ENCODE measurements at regions of chr18 and their contacts with region 1.

Region 1: GRCh38 chr18:57446322-57446721 is 11.1 kb downstream of the ONECUT2 start:
- DNase-seq: no peak
- ATAC-seq: no peak
- H3K4me3 ChIP-seq: no peak overlapping the region
- H3K27ac ChIP-seq: no peak overlapping the region
- H3K4me1 ChIP-seq: peaks cover 0 to 5% (median under 1%) of the 10 kb centered on the region in 12 donors
- H3K27me3 ChIP-seq: peaks cover 18 to 79% (median 47%) of the 10 kb centered on the region in 9 donors
- CTCF ChIP-seq: peak; percentile 5 to 49 (median 26)
- POLR2A ChIP-seq: no peak

Region 2: DNA sequence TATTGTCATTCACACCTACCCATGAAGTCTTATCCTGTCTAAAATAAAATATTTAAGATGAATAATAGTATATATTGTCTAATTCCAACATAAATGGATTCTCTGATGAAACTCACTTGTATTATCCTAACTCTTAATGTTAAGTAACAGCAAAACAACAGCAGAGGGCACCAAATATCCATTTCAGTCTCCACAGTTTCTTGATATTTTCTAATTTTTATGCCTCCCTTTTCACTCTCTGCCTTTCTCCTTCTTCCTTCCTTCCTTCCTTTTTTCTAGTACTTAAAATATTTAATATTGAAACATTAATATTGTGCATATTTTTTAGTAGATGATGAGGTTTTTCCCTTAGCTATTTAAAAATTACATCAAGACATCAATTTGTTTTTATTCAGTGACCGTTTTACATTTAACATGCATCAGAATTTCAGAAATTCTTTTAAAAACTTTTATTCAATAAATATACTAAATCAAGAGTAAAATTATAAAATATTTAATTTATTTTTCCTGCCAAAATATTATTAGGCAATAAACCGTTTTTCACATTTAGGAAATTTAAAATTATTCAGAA is 697.5 kb before region 1 on chr18:
- intact Hi-C with region 1: loop called in 3 of 10 experiments (anchors 5 to 10 kb)
- DNase-seq: no peak
- ATAC-seq: no peak
- H3K4me3 ChIP-seq: no peak overlapping the region
- H3K27ac ChIP-seq: no peak overlapping the region
- H3K4me1 ChIP-seq: peaks cover 0 to 28% (median 5%) of the 10 kb centered on the region in 12 donors
- H3K27me3 ChIP-seq: no peaks in the 10 kb centered on the region
- CTCF ChIP-seq: peak; percentile 43 to 78 (median 68)
- POLR2A ChIP-seq: no peak

Region 3: DNA sequence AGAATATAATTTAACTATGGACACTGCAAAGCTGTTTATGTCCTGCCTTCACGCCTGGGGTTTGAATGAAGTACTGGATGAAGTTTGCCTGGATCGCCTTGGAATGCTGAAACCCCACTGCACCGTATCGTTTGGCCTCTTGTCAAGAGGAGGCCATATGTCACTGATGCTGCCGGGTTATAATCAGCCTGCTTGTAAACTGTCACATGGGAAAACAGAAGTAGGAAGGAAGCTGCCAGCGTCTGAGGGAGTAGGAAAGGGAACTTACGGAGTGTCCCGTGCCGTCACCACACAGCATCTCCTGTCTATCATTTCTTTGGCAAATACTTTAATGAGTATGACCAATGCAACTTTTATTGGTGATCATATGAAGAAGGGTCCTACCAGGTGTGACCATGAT is 689.4 kb before region 1 on chr18:
- intact Hi-C with region 1: loop called in 2 of 10 experiments (anchors 5 to 10 kb)
- DNase-seq: peak in 2 of 5 donors; percentile 9 to 34
- ATAC-seq: peak in 3 of 4 donors; percentile 43 to 71 (median 54)
- H3K4me3 ChIP-seq: no peak overlapping the region
- H3K27ac ChIP-seq: no peak overlapping the region
- H3K4me1 ChIP-seq: peaks cover 0 to 11% (median 4%) of the 10 kb centered on the region in 12 donors
- H3K27me3 ChIP-seq: no peaks in the 10 kb centered on the region
- CTCF ChIP-seq: no peak
- POLR2A ChIP-seq: no peak

Region 4: DNA sequence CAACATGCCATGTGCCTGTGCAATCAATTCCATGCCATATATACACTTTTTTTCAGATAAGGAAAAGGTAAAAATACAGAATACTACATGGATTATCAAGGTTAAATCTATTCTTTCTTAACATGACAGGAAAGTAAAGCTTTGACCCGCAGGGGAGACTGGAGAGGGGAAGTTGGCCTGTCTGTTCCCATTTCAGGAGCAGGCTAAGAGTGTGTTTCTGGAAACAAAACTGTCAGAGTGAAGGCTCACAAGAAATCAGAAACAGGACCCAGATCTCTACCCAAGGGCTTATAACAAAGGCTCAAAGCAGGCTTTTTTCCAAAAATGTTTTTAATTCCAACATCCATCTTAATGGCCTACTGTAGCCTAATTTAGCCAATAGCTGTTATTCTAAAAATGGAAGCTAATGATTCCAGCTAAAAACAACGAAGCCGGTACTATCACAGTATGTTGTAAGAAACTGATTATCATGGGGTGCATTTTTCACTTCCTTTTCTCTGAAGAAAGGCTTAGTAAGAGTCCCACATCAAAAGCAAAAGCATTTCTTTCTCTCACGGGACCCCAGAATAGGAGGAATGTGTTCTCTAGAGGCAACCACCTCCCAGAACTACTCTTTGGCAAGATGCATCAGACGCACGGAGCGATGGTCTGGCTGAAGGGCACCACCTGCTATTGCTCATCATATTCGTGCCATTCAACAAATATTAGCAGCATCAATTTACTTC is 98.8 kb after region 1 on chr18:
- intact Hi-C with region 1: loop called in 1 of 10 experiments (anchors 10 kb)
- DNase-seq: no peak
- ATAC-seq: no peak
- H3K4me3 ChIP-seq: no peak overlapping the region
- H3K27ac ChIP-seq: peak overlapping the region in 1 of 12 donors; percentile 69
- H3K4me1 ChIP-seq: peaks cover 0 to 11% (median 0%) of the 10 kb centered on the region in 12 donors
- H3K27me3 ChIP-seq: no peaks in the 10 kb centered on the region
- CTCF ChIP-seq: no peak
- POLR2A ChIP-seq: no peak